A673 (cell line): ENCODE measurements at regions of chr1 and their contacts with region 1.

Region 1: GRCh38 chr1:164673584-164674214 is 114.7 kb downstream of the PBX1 start:
- DNase-seq: peak; percentile 52
- H3K4me3 ChIP-seq: no peak overlapping the region
- H3K27ac ChIP-seq: no peak overlapping the region
- H3K4me1 ChIP-seq: peaks cover 6% of the 10 kb centered on the region
- H3K27me3 ChIP-seq: no peaks in the 10 kb centered on the region
- CTCF ChIP-seq: peak; percentile 71

Region 2: DNA sequence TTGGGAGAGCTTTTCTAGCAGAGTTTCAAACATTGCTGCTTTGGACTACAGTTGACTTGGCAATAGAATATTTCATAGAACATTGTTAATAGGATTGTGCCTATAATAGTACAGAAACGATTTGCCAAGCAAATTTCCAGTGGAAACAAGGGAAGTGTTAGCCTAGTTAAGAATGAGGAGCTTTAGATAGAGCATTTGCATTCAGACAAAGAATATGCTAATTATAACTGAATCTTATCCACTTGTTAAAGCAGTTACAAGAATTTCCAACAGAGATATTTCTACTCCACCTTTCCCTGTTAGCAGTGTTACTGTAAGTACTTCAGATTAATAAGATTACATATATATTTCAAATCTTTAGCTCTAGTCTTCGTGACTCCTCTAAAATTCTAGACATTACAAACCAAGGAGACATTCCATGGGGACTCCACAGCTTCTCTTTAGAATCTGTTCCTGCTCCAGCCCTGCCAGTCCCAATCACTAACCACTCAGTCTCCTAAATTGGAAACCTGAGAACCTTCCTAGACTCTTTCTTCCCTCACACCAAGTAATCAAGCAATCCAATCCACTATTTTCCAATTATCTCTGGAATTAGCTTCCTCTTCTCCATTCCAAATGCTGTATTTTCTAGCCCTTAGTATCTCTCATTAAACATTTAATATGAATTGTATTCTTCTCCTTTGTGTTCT is 256.5 kb before region 1 on chr1:
- CTCF ChIA-PET with region 1: no interaction called
- POLR2A ChIA-PET with region 1: no interaction called
- intact Hi-C with region 1: no loop called
- DNase-seq: peak; percentile 13
- H3K4me3 ChIP-seq: no peak overlapping the region
- H3K27ac ChIP-seq: no peak overlapping the region
- H3K4me1 ChIP-seq: peaks cover 6% of the 10 kb centered on the region
- H3K27me3 ChIP-seq: no peaks in the 10 kb centered on the region
- CTCF ChIP-seq: no peak

Region 3: GRCh38 chr1:165467706-165468105 is 794.0 kb after region 1 on chr1:
- CTCF ChIA-PET with region 1: interaction called, 12 read pairs
- POLR2A ChIA-PET with region 1: no interaction called
- intact Hi-C with region 1: no loop called
- DNase-seq: no peak
- H3K4me3 ChIP-seq: no peak overlapping the region
- H3K27ac ChIP-seq: no peak overlapping the region
- H3K4me1 ChIP-seq: no peaks in the 10 kb centered on the region
- H3K27me3 ChIP-seq: peaks cover 22% of the 10 kb centered on the region
- CTCF ChIP-seq: no peak